ENCODE measurements at regions of chrX and their contacts with region 1.

Region 1: GRCh38 chrX:28408017-28408723 is 179.1 kb upstream of the IL1RAPL1 start:
- DNase-seq: no peak
- H3K4me3 ChIP-seq: no peak overlapping the region
- H3K27ac ChIP-seq: no peak overlapping the region
- H3K27me3 ChIP-seq: peaks cover 0 to 30% (median 0%) of the 10 kb centered on the region in 45 donors
- CTCF ChIP-seq: no peak

Region 2: GRCh38 chrX:28472926-28473325 is 64.8 kb after region 1 on chrX:
- intact Hi-C with region 1: loop called in 1 of 2 experiments (anchors 10 kb)
- DNase-seq: no peak
- H3K4me3 ChIP-seq: peak overlapping the region in 2 of 59 donors; percentile 8 to 10
- H3K27ac ChIP-seq: peak overlapping the region in 32 of 59 donors; percentile 9 to 85 (median 64)
- H3K27me3 ChIP-seq: peaks cover 0 to 15% (median 0%) of the 10 kb centered on the region in 45 donors
- CTCF ChIP-seq: peak in 1 of 56 donors; percentile 26

Measured in dorsolateral prefrontal cortex (tissue), 120 donors.